Ovary (tissue), 10 donors: ENCODE measurements at regions of chr3 and their contacts with region 1.

Region 1: GRCh38 chr3:191762323-191762960 is 301.5 kb downstream of the PYDC2 start:
- DNase-seq: no peak
- H3K4me3 ChIP-seq: no peak overlapping the region
- H3K27ac ChIP-seq: no peak overlapping the region
- H3K4me1 ChIP-seq: no peaks in the 10 kb centered on the region
- H3K27me3 ChIP-seq: no peaks in the 10 kb centered on the region
- CTCF ChIP-seq: no peak
- EP300 ChIP-seq: no peak
- POLR2A ChIP-seq: no peak

Region 2: DNA sequence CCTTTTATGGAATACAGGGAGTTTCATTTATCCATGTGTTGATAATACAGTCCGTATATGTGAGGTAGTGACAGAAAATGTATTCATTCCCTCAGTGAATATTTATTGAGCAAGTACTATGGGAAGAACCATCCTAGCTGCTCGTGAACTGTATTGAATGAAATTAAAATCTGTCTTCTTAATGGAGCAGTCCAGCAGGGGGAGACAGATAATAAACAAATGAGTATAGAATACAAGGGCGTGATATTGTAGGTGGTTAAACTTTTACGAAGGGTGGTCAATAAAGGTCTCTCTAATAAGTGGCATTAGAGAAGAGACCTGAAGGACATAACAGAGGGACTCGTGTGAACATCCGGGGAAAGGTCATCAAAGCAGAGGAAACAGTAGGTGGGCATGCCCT is 626.1 kb before region 1 on chr3:
- intact Hi-C with region 1: loop called in 1 of 4 experiments (anchors 10 kb)
- DNase-seq: no peak
- H3K4me3 ChIP-seq: no peak overlapping the region
- H3K27ac ChIP-seq: no peak overlapping the region
- H3K4me1 ChIP-seq: no peaks in the 10 kb centered on the region
- H3K27me3 ChIP-seq: no peaks in the 10 kb centered on the region
- CTCF ChIP-seq: no peak
- EP300 ChIP-seq: no peak
- POLR2A ChIP-seq: no peak

Region 3: DNA sequence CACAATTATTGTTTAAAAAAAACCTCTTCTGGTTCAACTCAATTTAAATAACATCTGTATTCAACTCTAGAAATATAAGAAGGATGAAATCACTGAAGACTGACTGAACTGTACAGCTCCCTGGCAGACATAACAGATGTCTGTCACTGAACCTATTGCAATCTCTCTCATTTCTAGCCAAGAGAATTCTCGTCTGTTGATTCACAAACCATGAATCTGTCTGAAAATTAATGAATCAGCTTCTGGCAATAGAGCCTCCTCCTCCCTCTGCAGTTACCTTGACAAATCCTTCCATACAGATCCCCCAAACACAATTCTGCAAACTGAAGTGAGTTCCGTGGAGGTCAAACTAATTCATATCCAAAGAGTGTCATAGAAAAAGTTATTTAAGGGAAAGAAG is 260.0 kb after region 1 on chr3:
- intact Hi-C with region 1: no loop called
- DNase-seq: no peak
- H3K4me3 ChIP-seq: no peak overlapping the region
- H3K27ac ChIP-seq: no peak overlapping the region
- H3K4me1 ChIP-seq: no peaks in the 10 kb centered on the region
- H3K27me3 ChIP-seq: no peaks in the 10 kb centered on the region
- CTCF ChIP-seq: no peak
- EP300 ChIP-seq: no peak
- POLR2A ChIP-seq: no peak